T-cell (primary cell): ENCODE measurements at regions of chr6 and their contacts with region 1.

Region 1: GRCh38 chr6:157013649-157014304 is 236.6 kb downstream of the ARID1B start:
- DNase-seq: no peak
- ATAC-seq: no peak
- H3K4me3 ChIP-seq: no peak overlapping the region
- H3K4me3 Mint-ChIP-seq: no peak overlapping the region
- H3K27ac ChIP-seq: no peak overlapping the region
- H3K27ac Mint-ChIP-seq: no peak overlapping the region
- H3K4me1 ChIP-seq: no peaks in the 10 kb centered on the region
- H3K4me1 Mint-ChIP-seq: peaks cover 64 to 76% (median 76%) of the 10 kb centered on the region in 3 donors
- H3K27me3 ChIP-seq: no peaks in the 10 kb centered on the region
- H3K27me3 Mint-ChIP-seq: no peaks in the 10 kb centered on the region

Region 2: GRCh38 chr6:155493694-155494143 is 1520.1 kb before region 1 on chr6:
- CTCF ChIA-PET with region 1: no interaction called
- POLR2A ChIA-PET with region 1: interaction called in 1 of 2 experiments, 12 read pairs
- DNase-seq: no peak
- ATAC-seq: no peak
- H3K4me3 ChIP-seq: no peak overlapping the region
- H3K4me3 Mint-ChIP-seq: no peak overlapping the region
- H3K27ac ChIP-seq: no peak overlapping the region
- H3K27ac Mint-ChIP-seq: no peak overlapping the region
- H3K4me1 ChIP-seq: no peaks in the 10 kb centered on the region
- H3K4me1 Mint-ChIP-seq: peaks cover 0 to 2% (median 2%) of the 10 kb centered on the region in 3 donors
- H3K27me3 ChIP-seq: no peaks in the 10 kb centered on the region
- H3K27me3 Mint-ChIP-seq: peaks cover 0 to 4% of the 10 kb centered on the region in 2 donors

Region 3: DNA sequence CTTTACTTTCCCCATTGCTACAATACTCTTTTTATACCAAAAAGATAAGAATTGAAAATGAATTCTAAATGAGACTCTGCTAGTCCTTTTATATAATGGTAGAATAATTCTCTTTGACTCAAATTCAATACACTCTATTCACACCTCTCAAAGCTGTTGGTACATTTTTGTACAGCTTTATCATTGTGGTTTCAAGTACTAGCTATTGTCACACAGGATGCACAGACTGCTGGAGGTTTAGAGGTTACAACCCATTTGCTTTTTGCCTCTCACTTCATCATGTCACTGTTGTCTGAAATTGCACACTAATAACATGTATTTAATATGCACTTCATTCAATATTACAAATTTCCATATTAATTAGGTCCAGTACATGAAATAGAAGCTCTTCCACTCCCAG is 678.8 kb before region 1 on chr6:
- CTCF ChIA-PET with region 1: no interaction called
- POLR2A ChIA-PET with region 1: interaction called in 1 of 2 experiments, 12 read pairs
- DNase-seq: no peak
- ATAC-seq: no peak
- H3K4me3 ChIP-seq: no peak overlapping the region
- H3K4me3 Mint-ChIP-seq: no peak overlapping the region
- H3K27ac ChIP-seq: no peak overlapping the region
- H3K27ac Mint-ChIP-seq: no peak overlapping the region
- H3K4me1 ChIP-seq: no peaks in the 10 kb centered on the region
- H3K4me1 Mint-ChIP-seq: peaks cover 0 to 2% (median 0%) of the 10 kb centered on the region in 3 donors
- H3K27me3 ChIP-seq: no peaks in the 10 kb centered on the region
- H3K27me3 Mint-ChIP-seq: peaks cover 0 to under 1% of the 10 kb centered on the region in 2 donors

Region 4: DNA sequence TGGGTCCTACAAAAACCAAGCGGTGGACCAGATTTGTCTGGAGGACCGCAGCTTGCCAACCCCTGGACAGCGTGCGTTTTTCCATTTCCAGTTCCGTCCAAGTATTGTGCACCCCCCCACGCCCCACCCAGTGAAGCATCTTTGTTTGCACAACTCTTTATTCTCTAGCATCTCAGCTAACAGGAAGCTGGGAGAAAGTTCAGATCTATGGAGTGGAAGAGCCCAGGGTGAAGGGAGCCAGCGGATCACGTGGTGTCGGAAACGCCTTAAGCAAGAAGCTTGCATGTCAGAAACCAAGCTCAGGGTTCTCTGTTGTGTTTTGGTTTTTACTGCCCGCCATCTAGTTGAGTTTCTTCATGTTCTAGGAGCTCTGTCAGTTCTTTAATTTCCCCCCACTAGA is 206.7 kb before region 1 on chr6:
- CTCF ChIA-PET with region 1: interaction called in 1 of 2 experiments, 8 read pairs
- POLR2A ChIA-PET with region 1: interaction called in 1 of 2 experiments, 12 read pairs
- DNase-seq: no peak
- ATAC-seq: peak in 1 of 4 experiments; percentile 28
- H3K4me3 ChIP-seq: no peak overlapping the region
- H3K4me3 Mint-ChIP-seq: peak overlapping the region in 2 of 3 donors; percentile 21 to 56
- H3K27ac ChIP-seq: no peak overlapping the region
- H3K27ac Mint-ChIP-seq: peak overlapping the region; percentile 39 to 52
- H3K4me1 ChIP-seq: peaks cover 24 to 34% of the 10 kb centered on the region in 2 experiments
- H3K4me1 Mint-ChIP-seq: peaks cover 90 to 94% (median 91%) of the 10 kb centered on the region in 3 donors
- H3K27me3 ChIP-seq: no peaks in the 10 kb centered on the region
- H3K27me3 Mint-ChIP-seq: no peaks in the 10 kb centered on the region

Region 5: DNA sequence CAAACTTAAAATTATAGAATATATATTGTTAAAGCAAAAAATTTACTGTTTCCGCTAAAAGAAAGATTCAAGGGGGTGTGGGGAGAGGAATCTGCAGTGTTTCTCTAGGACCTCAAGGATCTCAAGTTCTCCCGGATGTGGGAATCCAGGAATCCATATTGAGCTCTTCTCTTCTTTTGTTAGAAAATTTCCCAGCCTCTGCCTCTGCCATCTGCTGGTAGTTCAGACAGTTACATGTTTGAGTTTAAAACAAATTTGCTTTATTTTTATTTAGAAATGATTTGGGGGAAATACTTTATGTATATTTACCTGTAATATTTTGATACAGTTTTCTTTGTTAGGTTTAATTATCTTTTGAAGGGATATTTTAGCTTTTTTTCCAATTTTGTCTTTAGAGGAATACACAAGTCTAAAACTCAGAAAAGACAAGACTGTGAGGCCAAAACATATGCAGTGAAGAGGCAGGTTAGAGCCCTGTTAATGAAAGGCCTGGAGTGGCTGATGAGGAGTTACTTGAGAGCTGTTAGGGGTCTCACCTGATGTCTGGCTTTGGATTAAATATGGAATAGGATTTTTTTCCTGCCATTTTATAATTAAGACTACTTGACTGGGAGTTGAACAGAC is 32.2 kb after region 1 on chr6:
- CTCF ChIA-PET with region 1: no interaction called
- POLR2A ChIA-PET with region 1: no interaction called
- DNase-seq: peak in 1 of 35 experiments; percentile 25
- ATAC-seq: no peak
- H3K4me3 ChIP-seq: no peak overlapping the region
- H3K4me3 Mint-ChIP-seq: no peak overlapping the region
- H3K27ac ChIP-seq: no peak overlapping the region
- H3K27ac Mint-ChIP-seq: no peak overlapping the region
- H3K4me1 ChIP-seq: no peaks in the 10 kb centered on the region
- H3K4me1 Mint-ChIP-seq: peaks cover 10 to 21% (median 13%) of the 10 kb centered on the region in 3 donors
- H3K27me3 ChIP-seq: no peaks in the 10 kb centered on the region
- H3K27me3 Mint-ChIP-seq: no peaks in the 10 kb centered on the region

Region 6: GRCh38 chr6:158329531-158329930 is 1315.8 kb after region 1 on chr6:
- CTCF ChIA-PET with region 1: no interaction called
- POLR2A ChIA-PET with region 1: no interaction called
- DNase-seq: no peak
- ATAC-seq: no peak
- H3K4me3 ChIP-seq: no peak overlapping the region
- H3K4me3 Mint-ChIP-seq: no peak overlapping the region
- H3K27ac ChIP-seq: no peak overlapping the region
- H3K27ac Mint-ChIP-seq: no peak overlapping the region
- H3K4me1 ChIP-seq: peaks cover 2 to 5% of the 10 kb centered on the region in 2 experiments
- H3K4me1 Mint-ChIP-seq: peaks cover 37 to 45% (median 43%) of the 10 kb centered on the region in 3 donors
- H3K27me3 ChIP-seq: no peaks in the 10 kb centered on the region
- H3K27me3 Mint-ChIP-seq: no peaks in the 10 kb centered on the region

Region 7: GRCh38 chr6:158729914-158730907 is 1716.4 kb after region 1 on chr6:
- CTCF ChIA-PET with region 1: no interaction called
- POLR2A ChIA-PET with region 1: interaction called in 1 of 2 experiments, 13 read pairs
- DNase-seq: no peak
- ATAC-seq: no peak
- H3K4me3 ChIP-seq: no peak overlapping the region
- H3K4me3 Mint-ChIP-seq: no peak overlapping the region
- H3K27ac ChIP-seq: no peak overlapping the region
- H3K27ac Mint-ChIP-seq: no peak overlapping the region
- H3K4me1 ChIP-seq: peaks cover 0 to 3% of the 10 kb centered on the region in 2 experiments
- H3K4me1 Mint-ChIP-seq: peaks cover 0 to 3% (median 0%) of the 10 kb centered on the region in 3 donors
- H3K27me3 ChIP-seq: peaks cover 0 to 4% of the 10 kb centered on the region in 2 experiments
- H3K27me3 Mint-ChIP-seq: no peaks in the 10 kb centered on the region